ENCODE measurements at regions of chr10 and their contacts with region 1.

Region 1: DNA sequence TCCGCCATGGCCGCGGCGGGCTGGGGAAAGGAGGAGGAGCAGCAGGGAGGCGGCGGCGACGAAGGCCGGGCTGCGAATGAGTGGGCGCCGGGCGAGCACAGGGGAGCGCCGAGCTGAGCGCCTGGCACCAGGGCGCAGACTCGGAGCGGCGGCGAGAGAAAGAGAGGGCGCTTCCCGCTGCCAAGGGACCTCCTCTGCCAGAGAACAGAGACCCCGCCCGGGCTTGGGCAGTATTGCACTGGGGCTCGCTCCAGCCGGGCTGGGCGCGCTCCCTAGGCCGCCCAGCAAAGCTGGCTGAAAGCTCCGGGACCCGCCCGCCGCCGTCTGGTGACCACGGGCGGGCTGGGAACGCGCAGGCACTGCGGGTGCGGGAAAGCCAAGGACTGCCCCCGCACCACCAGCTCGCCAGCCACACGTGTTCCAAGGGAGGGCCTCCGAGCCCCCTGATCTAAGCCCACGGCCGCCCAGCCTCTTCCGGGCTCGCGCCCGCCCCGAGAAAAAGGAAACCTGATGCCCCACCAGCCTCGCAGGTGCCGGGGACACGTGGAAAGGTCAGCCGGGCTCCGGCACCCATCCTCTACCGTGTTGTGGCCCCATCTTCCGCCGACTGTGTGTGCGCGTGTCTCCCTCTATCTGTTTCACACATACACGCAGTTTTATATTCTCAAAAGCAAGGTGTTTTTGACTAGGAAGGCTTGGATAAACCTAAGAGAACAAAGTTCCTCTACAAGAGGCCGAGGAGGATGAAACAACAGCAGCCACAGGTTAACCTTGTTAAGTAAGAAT is at the start of gene CCDC6:
- DNase-seq: no peak
- ATAC-seq: peak; percentile 86
- H3K4me3 ChIP-seq: peak within 1 kb of the TSS; percentile 94
- H3K27ac ChIP-seq: peak within 1 kb of the TSS; percentile 88
- H3K4me1 ChIP-seq: peaks cover 8% of the 10 kb centered on the region; the same call in 1 of the 2 replicates
- H3K27me3 ChIP-seq: no peaks in the 10 kb centered on the region
- CTCF ChIP-seq: peak; percentile 63 to 84 (median 83)
- EP300 ChIP-seq: 0 out of 4 replicates have a peak, but pooled peaks of 1 of the 2 experiments have one; percentile 8
- POLR2A ChIP-seq: peak; percentile 86
- RAD21 ChIP-seq: peak; percentile 88
- polyA plus RNA-seq, gene CCDC6: 11.8 to 12.3 TPM

Region 2: GRCh38 chr10:58268870-58269605 is 1637.6 kb before region 1 on chr10 and contains the start of gene CISD1:
- CTCF ChIA-PET with region 1: no interaction called
- POLR2A ChIA-PET with region 1: no interaction called
- RAD21 ChIA-PET with region 1: no interaction called
- SMC1A ChIA-PET with region 1: no interaction called
- in situ Hi-C with region 1: no loop called
- intact Hi-C with region 1: loop called (anchors 10 kb)
- DNase-seq: peak; percentile 96
- ATAC-seq: peak; percentile 76
- H3K4me3 ChIP-seq: peak within 1 kb of the TSS; percentile 76
- H3K27ac ChIP-seq: peak within 1 kb of the TSS; percentile 86
- H3K4me1 ChIP-seq: 0 out of 2 replicates have a peak, but pooled peaks cover 5% of the 10 kb centered on the region
- H3K27me3 ChIP-seq: no peaks in the 10 kb centered on the region
- CTCF ChIP-seq: no peak
- EP300 ChIP-seq: no peak
- POLR2A ChIP-seq: peak; percentile 93
- RAD21 ChIP-seq: no peak
- polyA plus RNA-seq, gene CISD1: 156 to 162 TPM

Region 3: DNA sequence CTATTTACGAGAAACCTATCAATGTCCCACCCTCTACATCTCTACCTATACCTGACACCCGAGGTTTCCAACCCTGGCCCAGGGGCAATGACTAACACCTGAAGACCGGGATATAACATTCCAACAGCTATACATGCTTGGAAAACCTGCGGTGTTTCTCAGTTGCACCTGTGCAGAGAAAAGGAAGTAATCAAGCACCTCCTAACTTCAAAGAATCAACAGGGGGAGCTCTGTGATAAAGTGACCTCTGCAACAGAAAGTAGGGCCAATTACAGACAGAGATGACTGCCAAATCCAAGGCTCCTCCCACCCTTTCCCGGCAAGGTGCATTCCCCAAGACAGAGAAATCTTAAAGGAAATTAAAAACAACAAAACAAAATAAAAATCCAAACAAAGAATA is 41.5 kb before region 1 on chr10:
- CTCF ChIA-PET with region 1: interaction called, 181 read pairs
- POLR2A ChIA-PET with region 1: interaction called, 8 read pairs
- RAD21 ChIA-PET with region 1: interaction called, 140 read pairs
- SMC1A ChIA-PET with region 1: interaction called, 143 read pairs
- in situ Hi-C with region 1: no loop called
- intact Hi-C with region 1: loop called (anchors 1 kb)
- DNase-seq: no peak
- ATAC-seq: peak; percentile 91
- H3K4me3 ChIP-seq: no peak overlapping the region
- H3K27ac ChIP-seq: no peak overlapping the region
- H3K4me1 ChIP-seq: peaks cover 7% of the 10 kb centered on the region
- H3K27me3 ChIP-seq: no peaks in the 10 kb centered on the region
- CTCF ChIP-seq: peak; percentile 54 to 75 (median 58)
- EP300 ChIP-seq: no peak
- POLR2A ChIP-seq: no peak
- RAD21 ChIP-seq: peak; percentile 90

Region 4: GRCh38 chr10:59885430-59886134 is 21.0 kb before region 1 on chr10:
- CTCF ChIA-PET with region 1: interaction called, 11 read pairs
- POLR2A ChIA-PET with region 1: interaction called, 5 read pairs
- RAD21 ChIA-PET with region 1: interaction called, 18 read pairs
- SMC1A ChIA-PET with region 1: interaction called, 62 read pairs
- in situ Hi-C with region 1: no loop called
- intact Hi-C with region 1: loop called (anchors 1 kb)
- DNase-seq: peak; percentile 85
- ATAC-seq: peak; percentile 80
- H3K4me3 ChIP-seq: peak overlapping the region; percentile 30
- H3K27ac ChIP-seq: peak overlapping the region; percentile 54
- H3K4me1 ChIP-seq: peaks cover 41% of the 10 kb centered on the region
- H3K27me3 ChIP-seq: no peaks in the 10 kb centered on the region
- CTCF ChIP-seq: no peak
- EP300 ChIP-seq: peak; percentile 69 to 95
- POLR2A ChIP-seq: no peak
- RAD21 ChIP-seq: no peak

Region 5: DNA sequence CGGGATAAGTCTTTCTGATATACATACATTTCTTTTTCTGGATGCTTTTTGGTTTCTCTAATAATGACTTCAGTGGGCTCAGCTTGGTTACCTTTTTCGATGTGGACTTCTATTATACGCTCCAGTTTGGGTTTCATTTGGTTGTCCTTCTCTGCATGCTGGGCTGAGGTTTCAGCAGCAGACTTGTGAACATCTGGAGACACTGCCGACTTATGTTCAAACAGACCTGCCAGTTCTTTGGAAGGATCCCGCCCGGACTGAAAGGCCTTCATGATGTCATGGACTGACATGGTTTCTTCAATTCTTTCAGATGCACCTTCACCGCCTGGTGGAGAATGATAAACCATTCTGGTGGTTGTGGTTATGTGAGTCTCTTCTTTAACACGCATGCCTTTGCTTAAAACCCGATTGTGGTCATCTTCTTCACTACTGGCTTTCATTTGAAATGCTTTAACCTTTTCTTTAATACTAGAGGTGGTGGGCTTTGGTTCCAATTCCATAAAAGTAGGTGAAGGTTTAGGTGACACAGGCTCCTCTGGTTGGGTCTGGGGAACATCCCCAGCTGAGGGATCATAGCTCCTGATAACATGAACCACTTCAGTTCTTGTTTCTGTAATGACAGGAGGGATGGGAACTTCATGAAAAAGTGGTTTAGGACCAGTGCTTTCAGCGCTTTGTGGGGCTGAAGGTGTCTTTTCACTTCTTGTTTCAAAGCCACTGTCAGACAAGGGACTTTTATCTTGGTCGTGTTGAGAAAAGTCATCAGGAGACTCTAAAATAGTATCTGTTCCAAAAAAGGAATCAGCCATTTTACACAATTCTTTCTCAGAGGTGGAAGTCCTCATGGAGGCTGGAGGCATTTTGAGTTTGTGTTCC is 167.4 kb after region 1 on chr10:
- CTCF ChIA-PET with region 1: no interaction called
- POLR2A ChIA-PET with region 1: no interaction called
- RAD21 ChIA-PET with region 1: interaction called, 3 read pairs
- SMC1A ChIA-PET with region 1: interaction called, 3 read pairs
- in situ Hi-C with region 1: no loop called
- intact Hi-C with region 1: loop called (anchors 1 kb)
- DNase-seq: peak; percentile 76
- ATAC-seq: peak; percentile 94
- H3K4me3 ChIP-seq: peak overlapping the region; percentile 24; the same call in 1 of the 2 replicates
- H3K27ac ChIP-seq: peak overlapping the region; percentile 67
- H3K4me1 ChIP-seq: peaks cover 14% of the 10 kb centered on the region
- H3K27me3 ChIP-seq: no peaks in the 10 kb centered on the region
- CTCF ChIP-seq: 0 out of 6 replicates have a peak, but pooled peaks of 1 of the 3 experiments have one; percentile 9
- EP300 ChIP-seq: peak; percentile 75 to 83; a peak in 3 of 4 replicates
- POLR2A ChIP-seq: no peak
- RAD21 ChIP-seq: peak; percentile 12; the same call in 1 of the 2 replicates

Region 6: GRCh38 chr10:60186315-60187071 is 279.9 kb after region 1 on chr10:
- CTCF ChIA-PET with region 1: no interaction called
- POLR2A ChIA-PET with region 1: no interaction called
- RAD21 ChIA-PET with region 1: no interaction called
- SMC1A ChIA-PET with region 1: no interaction called
- in situ Hi-C with region 1: no loop called
- intact Hi-C with region 1: no loop called
- DNase-seq: no peak
- ATAC-seq: no peak
- H3K4me3 ChIP-seq: no peak overlapping the region
- H3K27ac ChIP-seq: no peak overlapping the region
- H3K4me1 ChIP-seq: no peaks in the 10 kb centered on the region
- H3K27me3 ChIP-seq: no peaks in the 10 kb centered on the region; a peak in 1 of 4 replicates
- CTCF ChIP-seq: no peak
- EP300 ChIP-seq: no peak
- POLR2A ChIP-seq: no peak
- RAD21 ChIP-seq: no peak

Region 7: GRCh38 chr10:60351191-60351853 is 444.7 kb after region 1 on chr10:
- CTCF ChIA-PET with region 1: no interaction called
- POLR2A ChIA-PET with region 1: no interaction called
- RAD21 ChIA-PET with region 1: no interaction called
- SMC1A ChIA-PET with region 1: no interaction called
- in situ Hi-C with region 1: no loop called
- intact Hi-C with region 1: loop called (anchors 10 kb)
- DNase-seq: peak; percentile 40
- ATAC-seq: peak; percentile 85
- H3K4me3 ChIP-seq: no peak overlapping the region; the same call in 1 of the 2 replicates
- H3K27ac ChIP-seq: peak overlapping the region; percentile 45; the same call in 1 of the 2 replicates
- H3K4me1 ChIP-seq: peaks cover 34% of the 10 kb centered on the region
- H3K27me3 ChIP-seq: no peaks in the 10 kb centered on the region
- CTCF ChIP-seq: no peak
- EP300 ChIP-seq: peak; percentile 9 to 73; a peak in 3 of 4 replicates
- POLR2A ChIP-seq: no peak
- RAD21 ChIP-seq: no peak

Measured in GM12878 (cell line).